CD4-positive, alpha-beta T cell (primary cell): ENCODE measurements at regions of chr14 and their contacts with region 1.

Region 1: DNA sequence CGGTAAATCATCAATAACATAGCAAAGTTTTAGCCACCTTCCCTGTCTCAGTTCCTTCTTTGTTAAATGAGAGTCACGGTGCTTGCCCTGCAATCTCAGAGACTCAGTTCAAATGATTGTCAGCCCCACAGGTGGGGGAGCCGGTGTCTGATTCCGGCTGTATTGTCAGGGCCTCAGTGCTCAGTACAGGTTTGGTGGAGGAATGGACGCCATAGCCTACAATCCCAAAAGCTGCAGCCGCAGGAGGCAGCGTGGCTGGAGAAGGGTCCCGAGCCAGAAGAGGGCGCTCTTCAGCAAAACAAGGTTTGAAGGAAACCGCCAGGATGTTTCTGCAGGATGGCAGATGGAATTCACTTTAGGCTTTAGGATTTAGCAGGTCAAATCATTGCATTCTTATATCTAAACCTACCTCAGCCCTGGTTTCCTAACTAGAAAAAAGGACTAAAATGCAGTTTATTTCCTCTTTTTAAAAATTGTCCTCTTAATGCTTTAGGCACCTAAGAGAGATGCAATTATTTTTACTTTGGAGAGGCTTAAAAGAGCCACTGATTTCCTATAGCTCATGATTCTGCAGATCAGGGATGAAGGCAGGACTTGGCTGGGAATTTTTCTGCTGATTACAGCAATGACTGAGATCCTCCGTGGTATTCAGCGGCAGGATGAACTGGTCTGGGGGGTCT is 29.2 kb downstream of the FOS start:
- DNase-seq: peak; percentile 56 to 87 (median 65)
- ATAC-seq: peak; percentile 64
- H3K4me3 ChIP-seq: no peak overlapping the region
- H3K4me3 Mint-ChIP-seq: no peak overlapping the region
- H3K27ac ChIP-seq: no peak overlapping the region
- H3K27ac Mint-ChIP-seq: no peak overlapping the region
- H3K4me1 ChIP-seq: peaks cover 13% of the 10 kb centered on the region
- H3K4me1 Mint-ChIP-seq: peaks cover 10% of the 10 kb centered on the region
- H3K27me3 ChIP-seq: no peaks in the 10 kb centered on the region
- H3K27me3 Mint-ChIP-seq: no peaks in the 10 kb centered on the region
- CTCF ChIP-seq: peak; percentile 95

Region 2: DNA sequence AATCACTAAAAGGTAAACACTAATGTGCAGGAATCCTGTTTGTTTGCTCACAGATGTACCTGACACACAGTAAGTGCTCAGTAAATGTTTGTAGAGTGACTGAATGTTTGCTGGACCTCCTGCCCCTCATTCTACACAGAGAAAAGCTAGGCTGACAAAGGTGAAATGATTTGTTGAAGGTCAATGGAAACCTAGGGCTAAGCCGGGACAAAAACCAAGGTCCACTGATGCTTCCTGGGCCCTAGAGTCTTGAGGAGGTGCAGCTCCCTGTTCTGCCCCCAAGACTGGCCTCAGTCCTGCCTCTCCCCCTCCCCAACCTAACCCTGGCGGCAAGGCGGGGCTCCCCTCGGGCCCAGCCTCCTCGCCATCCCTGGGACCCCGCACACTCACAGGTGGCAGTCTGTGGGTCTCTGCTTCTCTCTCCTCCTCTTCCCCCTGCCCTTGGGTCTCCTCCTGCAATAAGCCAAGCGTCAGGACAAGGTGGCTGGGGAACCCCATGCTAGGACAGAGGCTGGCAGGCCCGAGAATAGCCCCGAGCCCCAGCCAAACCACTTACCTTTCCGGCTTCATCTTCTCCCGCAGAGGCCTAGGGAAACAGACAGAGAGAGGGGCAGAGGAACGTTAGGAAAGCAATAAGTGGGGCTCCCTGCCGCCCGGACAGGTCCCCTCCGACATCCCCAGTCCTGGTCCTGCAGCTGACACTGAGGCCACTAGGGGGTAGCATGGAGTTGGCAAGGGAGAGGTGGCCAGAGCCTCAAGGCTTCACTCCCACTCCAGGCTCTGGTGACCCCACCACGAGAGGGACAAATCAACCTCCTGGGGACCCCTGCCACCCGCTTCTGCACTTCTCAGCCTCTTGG is 361.8 kb before region 1 on chr14:
- CTCF ChIA-PET with region 1: no interaction called
- POLR2A ChIA-PET with region 1: no interaction called
- intact Hi-C with region 1: loop called in 1 of 2 experiments (anchors 5 kb)
- DNase-seq: peak; percentile 57 to 84 (median 68)
- ATAC-seq: peak; percentile 71
- H3K4me3 ChIP-seq: no peak overlapping the region
- H3K4me3 Mint-ChIP-seq: peak overlapping the region; percentile 46
- H3K27ac ChIP-seq: no peak overlapping the region
- H3K27ac Mint-ChIP-seq: peak overlapping the region; percentile 52
- H3K4me1 ChIP-seq: peaks cover 32% of the 10 kb centered on the region
- H3K4me1 Mint-ChIP-seq: peaks cover 33% of the 10 kb centered on the region
- H3K27me3 ChIP-seq: no peaks in the 10 kb centered on the region
- H3K27me3 Mint-ChIP-seq: peaks cover 7% of the 10 kb centered on the region
- CTCF ChIP-seq: peak; percentile 92

Region 3: DNA sequence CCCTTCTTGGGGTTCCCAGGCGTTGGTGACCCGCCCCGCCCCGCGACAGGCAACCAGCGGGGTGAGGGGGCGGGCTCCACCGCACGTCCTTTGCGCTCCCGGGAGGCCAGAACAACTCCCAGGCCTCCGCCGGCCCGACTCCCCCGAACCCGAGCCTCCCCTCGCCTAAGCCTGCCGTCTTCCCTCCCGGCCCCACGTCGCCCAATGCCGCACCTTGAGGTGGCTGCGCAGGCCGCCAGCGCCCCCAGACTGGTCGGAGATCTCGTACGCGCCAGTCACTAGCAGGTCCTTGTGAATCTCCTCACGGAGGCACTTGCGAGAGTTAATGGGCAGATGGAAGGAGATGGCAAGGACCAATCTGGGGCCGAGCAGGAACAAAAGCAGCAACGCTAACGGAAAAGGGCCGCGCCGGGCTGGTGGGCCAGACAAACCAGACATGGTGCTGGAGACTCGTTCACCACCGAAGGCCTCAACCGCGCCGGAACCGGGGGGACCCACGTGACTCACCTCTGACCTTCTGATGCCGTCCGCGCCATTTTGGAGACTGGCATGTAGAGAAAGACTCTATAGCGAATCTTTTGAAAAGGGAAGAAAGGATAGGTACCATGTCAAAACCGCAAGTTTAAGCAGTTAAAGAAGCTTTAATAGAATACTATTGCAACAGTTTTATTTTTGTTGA is 131.6 kb before region 1 on chr14 and contains the start of gene TMED10:
- CTCF ChIA-PET with region 1: no interaction called
- POLR2A ChIA-PET with region 1: no interaction called
- intact Hi-C with region 1: loop called in 1 of 2 experiments (anchors 2 kb)
- DNase-seq: peak; percentile 84 to 95 (median 89)
- ATAC-seq: peak; percentile 75
- H3K4me3 ChIP-seq: peak within 1 kb of the TSS; percentile 79
- H3K4me3 Mint-ChIP-seq: peak within 1 kb of the TSS; percentile 94
- H3K27ac ChIP-seq: peak within 1 kb of the TSS; percentile 99 to 100
- H3K27ac Mint-ChIP-seq: peak within 1 kb of the TSS; percentile 97
- H3K4me1 ChIP-seq: peaks cover 30% of the 10 kb centered on the region
- H3K4me1 Mint-ChIP-seq: peaks cover 53% of the 10 kb centered on the region
- H3K27me3 ChIP-seq: no peaks in the 10 kb centered on the region
- H3K27me3 Mint-ChIP-seq: no peaks in the 10 kb centered on the region
- CTCF ChIP-seq: no peak
- total RNA-seq, gene TMED10: 153 to 156 TPM

Region 4: GRCh38 chr14:75427482-75428229 is 119.8 kb after region 1 on chr14 and contains the start of gene JDP2:
- CTCF ChIA-PET with region 1: no interaction called
- POLR2A ChIA-PET with region 1: no interaction called
- intact Hi-C with region 1: loop called in 1 of 2 experiments (anchors 10 kb)
- DNase-seq: peak; percentile 12 to 69 (median 38)
- ATAC-seq: peak; percentile 74
- H3K4me3 ChIP-seq: peak within 1 kb of the TSS; percentile 50
- H3K4me3 Mint-ChIP-seq: peak within 1 kb of the TSS; percentile 88
- H3K27ac ChIP-seq: no peak within 1 kb of the TSS
- H3K27ac Mint-ChIP-seq: no peak within 1 kb of the TSS
- H3K4me1 ChIP-seq: peaks cover 18% of the 10 kb centered on the region
- H3K4me1 Mint-ChIP-seq: no peaks in the 10 kb centered on the region
- H3K27me3 ChIP-seq: peaks cover 10 to 19% of the 10 kb centered on the region in 2 experiments
- H3K27me3 Mint-ChIP-seq: peaks cover 33% of the 10 kb centered on the region
- CTCF ChIP-seq: no peak
- total RNA-seq, gene JDP2: 1.1 to 1.2 TPM

Region 5: DNA sequence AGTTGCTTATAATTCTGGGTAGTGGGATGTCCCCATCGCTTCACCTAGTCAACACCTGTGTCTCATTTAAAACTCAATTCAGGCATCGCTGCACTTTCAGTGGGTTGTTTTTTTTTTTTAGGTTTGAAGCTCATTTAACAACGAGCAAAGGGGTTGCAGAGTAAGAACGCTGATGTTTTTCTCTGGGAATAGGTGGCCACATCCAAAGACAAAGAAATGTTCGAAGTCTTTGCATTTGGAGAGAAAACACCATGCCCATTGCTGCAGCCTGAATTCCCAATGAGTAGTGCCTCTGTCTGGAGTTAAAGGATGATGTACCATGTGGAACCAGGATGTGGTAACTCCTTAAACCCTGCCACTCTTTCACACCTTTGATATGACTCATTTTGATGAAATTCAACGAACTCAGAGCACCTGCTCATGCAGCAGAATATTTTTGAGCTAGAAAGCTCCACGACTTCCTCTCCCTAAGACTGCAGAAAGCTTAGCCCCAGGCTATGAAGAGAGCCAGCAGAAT is 179.4 kb after region 1 on chr14:
- CTCF ChIA-PET with region 1: interaction called, 11 read pairs
- POLR2A ChIA-PET with region 1: no interaction called
- intact Hi-C with region 1: loop called (anchors 1 kb)
- DNase-seq: peak in 4 of 14 experiments; percentile 8 to 56 (median 36)
- ATAC-seq: peak; percentile 30
- H3K4me3 ChIP-seq: no peak overlapping the region
- H3K4me3 Mint-ChIP-seq: no peak overlapping the region
- H3K27ac ChIP-seq: no peak overlapping the region
- H3K27ac Mint-ChIP-seq: no peak overlapping the region
- H3K4me1 ChIP-seq: peaks cover 13% of the 10 kb centered on the region
- H3K4me1 Mint-ChIP-seq: peaks cover 13% of the 10 kb centered on the region
- H3K27me3 ChIP-seq: no peaks in the 10 kb centered on the region
- H3K27me3 Mint-ChIP-seq: no peaks in the 10 kb centered on the region
- CTCF ChIP-seq: no peak

Region 6: DNA sequence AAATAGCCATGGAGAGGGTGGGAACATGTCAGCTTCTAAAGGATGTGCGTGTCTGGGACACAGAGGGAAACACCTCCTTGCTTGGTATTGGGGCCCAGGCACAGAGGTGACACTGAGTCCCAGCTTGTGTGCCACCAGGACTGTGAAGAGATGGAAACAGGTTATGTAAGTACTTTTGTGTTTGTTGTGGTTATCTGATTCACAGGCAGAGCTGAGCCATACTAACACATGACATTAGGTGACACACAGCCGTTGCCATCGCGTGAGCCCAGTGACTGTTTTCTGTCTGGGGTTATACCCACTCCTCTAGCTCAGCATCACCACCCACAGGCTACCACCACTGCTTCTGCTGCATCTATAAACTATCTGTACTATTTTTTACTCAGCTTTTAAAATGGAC is 258.5 kb after region 1 on chr14:
- CTCF ChIA-PET with region 1: interaction called, 3 read pairs
- POLR2A ChIA-PET with region 1: no interaction called
- intact Hi-C with region 1: loop called (anchors 1 to 2 kb)
- DNase-seq: peak; percentile 43 to 90 (median 68)
- ATAC-seq: peak; percentile 98
- H3K4me3 ChIP-seq: no peak overlapping the region
- H3K4me3 Mint-ChIP-seq: peak overlapping the region; percentile 26
- H3K27ac ChIP-seq: no peak overlapping the region
- H3K27ac Mint-ChIP-seq: peak overlapping the region; percentile 88
- H3K4me1 ChIP-seq: peaks cover 27% of the 10 kb centered on the region
- H3K4me1 Mint-ChIP-seq: peaks cover 33% of the 10 kb centered on the region
- H3K27me3 ChIP-seq: no peaks in the 10 kb centered on the region
- H3K27me3 Mint-ChIP-seq: no peaks in the 10 kb centered on the region
- CTCF ChIP-seq: no peak